Activated CD4-positive, alpha-beta T cell treated with anti-CD3 and anti-CD28 coated beads for 36 hours (primary cell): ENCODE measurements at regions of chr15 and their contacts with region 1.

Region 1: DNA sequence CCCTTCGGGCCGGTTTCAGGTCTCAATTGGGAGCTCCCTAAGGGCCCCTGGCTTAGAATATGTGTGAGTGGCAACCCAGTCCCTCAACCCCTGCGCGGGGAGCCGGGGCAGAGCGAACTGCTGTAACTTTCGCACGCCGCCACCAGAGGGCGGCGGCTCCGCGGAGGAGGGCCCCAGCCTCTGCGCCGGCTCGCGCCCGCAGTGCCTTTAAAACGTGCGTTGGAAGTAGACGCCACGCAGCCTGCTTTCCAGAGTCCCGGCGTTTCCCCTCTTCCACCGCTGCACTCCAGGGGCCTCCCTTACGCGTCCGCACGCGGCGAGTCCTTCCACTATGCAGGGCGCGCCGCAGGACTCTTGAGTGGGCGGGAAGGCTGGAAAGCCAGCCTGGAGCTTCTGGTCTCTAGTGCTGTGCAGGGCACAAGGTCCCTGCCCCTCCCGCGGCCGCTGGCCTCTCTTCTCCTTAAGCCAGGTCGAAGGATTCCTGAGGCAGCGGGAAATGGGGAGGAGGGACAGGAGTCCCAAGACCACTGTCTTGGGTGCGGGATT is 23.7 kb upstream of the RNU6-1 start:
- DNase-seq: peak; percentile 87
- ATAC-seq: peak; percentile 99
- H3K4me3 Mint-ChIP-seq: no peak overlapping the region
- H3K27ac Mint-ChIP-seq: no peak overlapping the region
- H3K4me1 Mint-ChIP-seq: peaks cover 4% of the 10 kb centered on the region
- H3K27me3 Mint-ChIP-seq: peaks cover 11% of the 10 kb centered on the region

Region 2: GRCh38 chr15:67622110-67622509 is 241.4 kb before region 1 on chr15:
- CTCF ChIA-PET with region 1: no interaction called
- POLR2A ChIA-PET with region 1: no interaction called
- intact Hi-C with region 1: no loop called
- DNase-seq: no peak
- ATAC-seq: no peak
- H3K4me3 Mint-ChIP-seq: no peak overlapping the region
- H3K27ac Mint-ChIP-seq: no peak overlapping the region
- H3K4me1 Mint-ChIP-seq: no peaks in the 10 kb centered on the region
- H3K27me3 Mint-ChIP-seq: no peaks in the 10 kb centered on the region

Region 3: GRCh38 chr15:68154923-68155559 is 291.5 kb after region 1 on chr15:
- CTCF ChIA-PET with region 1: interaction called, 14 read pairs
- POLR2A ChIA-PET with region 1: no interaction called
- intact Hi-C with region 1: loop called (anchors 1 to 2 kb)
- DNase-seq: peak; percentile 24
- ATAC-seq: no peak
- H3K4me3 Mint-ChIP-seq: no peak overlapping the region
- H3K27ac Mint-ChIP-seq: no peak overlapping the region
- H3K4me1 Mint-ChIP-seq: no peaks in the 10 kb centered on the region
- H3K27me3 Mint-ChIP-seq: no peaks in the 10 kb centered on the region

Region 4: DNA sequence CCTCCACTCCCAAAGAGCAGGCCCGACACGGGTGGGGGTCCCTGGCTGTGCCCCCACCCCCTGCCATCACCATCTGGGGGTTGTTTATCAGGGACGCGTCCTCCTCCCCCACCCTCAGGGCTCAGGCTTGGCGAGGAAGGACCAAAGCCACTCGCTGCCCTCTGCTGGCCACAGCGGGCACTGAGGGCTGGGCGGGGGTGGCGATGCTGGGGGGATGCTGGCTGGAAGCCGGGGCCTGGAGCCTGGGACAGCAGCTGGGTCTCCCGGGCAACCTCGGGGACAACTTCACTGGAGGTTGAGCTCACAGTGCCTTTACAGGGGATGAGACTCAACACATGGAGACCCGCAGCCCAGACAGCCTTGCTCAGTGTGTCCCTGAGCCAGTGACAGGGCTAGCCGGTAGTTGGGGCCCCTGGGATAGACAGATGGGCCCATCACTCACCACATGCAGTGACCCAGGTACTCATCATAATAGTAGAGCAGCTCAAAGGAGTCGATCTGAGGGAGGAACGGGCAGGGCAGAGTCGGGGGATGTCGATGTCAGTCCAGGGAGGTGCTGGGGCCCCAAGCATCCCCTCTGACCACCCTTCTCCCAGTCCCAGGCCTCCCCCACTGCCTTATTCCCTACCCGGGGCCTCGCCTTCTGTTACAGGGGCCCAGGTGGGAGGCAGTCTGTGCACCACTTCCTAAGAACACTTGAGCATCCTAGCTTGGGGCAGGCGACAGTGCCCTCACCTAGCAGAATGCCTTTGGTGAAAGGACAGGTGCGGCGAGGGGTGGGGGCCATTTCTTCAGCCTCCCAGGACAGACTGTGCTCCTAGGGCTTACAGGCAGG is 347.5 kb after region 1 on chr15:
- CTCF ChIA-PET with region 1: no interaction called
- POLR2A ChIA-PET with region 1: no interaction called
- intact Hi-C with region 1: loop called (anchors 1 to 5 kb)
- DNase-seq: peak; percentile 73
- ATAC-seq: peak; percentile 42
- H3K4me3 Mint-ChIP-seq: no peak overlapping the region
- H3K27ac Mint-ChIP-seq: no peak overlapping the region
- H3K4me1 Mint-ChIP-seq: peaks cover 20% of the 10 kb centered on the region
- H3K27me3 Mint-ChIP-seq: no peaks in the 10 kb centered on the region